ENCODE measurements at regions of chr2 and their contacts with region 1.

Region 1: GRCh38 chr2:170815746-170816503 is 762 bp upstream of the GAD1 start:
- DNase-seq: peak; percentile 54
- H3K4me3 Mint-ChIP-seq: peak overlapping the region; percentile 79
- H3K27ac Mint-ChIP-seq: peak overlapping the region; percentile 77
- H3K4me1 Mint-ChIP-seq: peaks cover 35% of the 10 kb centered on the region
- H3K27me3 Mint-ChIP-seq: peaks cover 83% of the 10 kb centered on the region

Region 2: GRCh38 chr2:170235860-170236679 is 579.9 kb before region 1 on chr2:
- intact Hi-C with region 1: loop called (anchors 1 kb)
- DNase-seq: no peak
- H3K4me3 Mint-ChIP-seq: no peak overlapping the region
- H3K27ac Mint-ChIP-seq: no peak overlapping the region
- H3K4me1 Mint-ChIP-seq: no peaks in the 10 kb centered on the region
- H3K27me3 Mint-ChIP-seq: peaks cover 21% of the 10 kb centered on the region

Region 3: DNA sequence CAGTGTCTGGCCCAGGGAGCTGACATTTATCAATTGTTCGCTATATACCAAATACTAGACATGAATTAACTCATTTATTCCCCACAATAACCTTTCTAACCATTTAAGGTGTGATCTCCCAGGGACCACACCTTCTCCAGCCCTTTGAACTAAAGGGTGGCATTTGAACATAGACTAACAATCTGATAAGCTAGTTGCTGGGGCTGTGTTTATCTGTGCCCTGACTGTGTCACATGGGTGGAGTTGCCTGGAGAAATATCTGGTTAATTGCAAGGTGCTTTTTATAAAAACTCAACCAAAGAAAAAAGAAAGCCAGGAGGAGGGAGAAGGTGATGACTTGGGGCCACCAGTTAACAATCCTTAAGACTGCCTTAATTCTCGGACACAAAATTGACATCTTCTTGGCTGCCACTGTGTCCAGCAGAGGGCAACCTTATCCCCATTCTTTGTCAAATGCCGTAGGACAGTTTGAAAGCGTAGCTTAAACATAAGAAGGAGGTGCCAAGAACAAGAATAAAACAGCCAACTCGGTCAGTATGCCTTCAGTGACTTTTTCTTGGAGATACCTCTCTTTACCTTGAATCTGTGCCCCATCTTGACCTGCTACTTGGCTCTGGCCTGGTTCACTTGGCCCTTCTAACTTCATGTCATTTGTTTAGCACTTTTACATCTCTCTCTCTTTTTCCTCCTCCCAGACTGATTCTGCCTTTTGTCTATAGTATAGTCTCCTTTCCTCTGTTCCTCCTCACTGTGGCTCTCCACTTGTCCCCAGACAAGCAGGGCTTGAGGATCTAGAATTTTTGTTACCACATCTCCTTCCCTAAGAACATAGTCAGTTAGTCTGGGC is 454.6 kb before region 1 on chr2:
- intact Hi-C with region 1: loop called (anchors 1 kb)
- DNase-seq: peak; percentile 39
- H3K4me3 Mint-ChIP-seq: no peak overlapping the region
- H3K27ac Mint-ChIP-seq: peak overlapping the region; percentile 94
- H3K4me1 Mint-ChIP-seq: peaks cover 33% of the 10 kb centered on the region
- H3K27me3 Mint-ChIP-seq: peaks cover 2% of the 10 kb centered on the region

Region 4: GRCh38 chr2:170396799-170397459 is 419.0 kb before region 1 on chr2:
- intact Hi-C with region 1: loop called (anchors 1 kb)
- DNase-seq: no peak
- H3K4me3 Mint-ChIP-seq: no peak overlapping the region
- H3K27ac Mint-ChIP-seq: no peak overlapping the region
- H3K4me1 Mint-ChIP-seq: no peaks in the 10 kb centered on the region
- H3K27me3 Mint-ChIP-seq: peaks cover 33% of the 10 kb centered on the region

Region 5: DNA sequence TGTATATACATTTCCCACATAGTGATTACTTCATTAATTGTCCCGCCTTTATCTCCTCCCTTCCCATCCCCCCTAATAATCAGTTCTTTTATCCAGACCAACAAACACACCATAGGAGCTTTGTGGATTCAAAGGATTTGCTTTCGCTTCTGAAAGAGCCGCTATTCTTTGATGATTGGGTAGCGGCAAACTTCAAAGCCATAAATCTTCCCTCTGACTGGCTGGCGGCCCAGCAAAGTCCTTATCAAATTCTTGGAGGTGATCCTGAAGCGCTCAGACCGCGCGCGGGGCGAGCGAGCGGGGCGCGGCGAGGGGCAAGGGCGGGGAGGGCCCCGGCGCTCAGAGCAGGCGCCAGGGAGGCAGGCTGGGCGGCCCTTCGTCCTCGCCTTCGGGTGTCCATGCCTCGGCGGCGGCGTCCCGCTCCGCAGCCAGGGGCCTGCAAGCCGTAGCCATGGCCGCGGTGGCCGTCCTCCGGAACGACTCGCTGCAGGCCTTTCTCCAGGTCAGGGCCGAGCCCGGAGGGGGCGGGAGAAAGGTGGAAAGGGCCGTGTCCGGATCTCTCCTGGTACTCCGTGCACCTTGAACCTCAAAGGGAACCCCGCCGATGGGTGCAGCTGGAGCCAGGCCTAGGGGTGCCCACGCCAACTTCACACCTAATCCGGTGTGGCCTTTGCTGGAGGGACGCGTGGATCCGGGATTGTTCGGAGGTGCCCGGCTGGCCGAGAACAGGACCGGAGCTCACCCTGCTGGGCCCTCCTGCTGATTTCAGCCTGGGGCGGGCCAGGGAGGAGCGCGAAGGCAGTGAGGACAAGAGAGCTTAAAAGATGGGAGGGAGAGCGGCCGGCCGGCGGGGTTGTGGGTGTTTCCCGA is 100.6 kb before region 1 on chr2 and contains the start of gene SP5:
- intact Hi-C with region 1: loop called (anchors 1 kb)
- DNase-seq: peak; percentile 13
- H3K4me3 Mint-ChIP-seq: peak within 1 kb of the TSS; percentile 78
- H3K27ac Mint-ChIP-seq: peak within 1 kb of the TSS; percentile 61
- H3K4me1 Mint-ChIP-seq: peaks cover 31% of the 10 kb centered on the region
- H3K27me3 Mint-ChIP-seq: peaks cover 68% of the 10 kb centered on the region
- total RNA-seq, gene SP5: not detected in 2 replicates

Region 6: DNA sequence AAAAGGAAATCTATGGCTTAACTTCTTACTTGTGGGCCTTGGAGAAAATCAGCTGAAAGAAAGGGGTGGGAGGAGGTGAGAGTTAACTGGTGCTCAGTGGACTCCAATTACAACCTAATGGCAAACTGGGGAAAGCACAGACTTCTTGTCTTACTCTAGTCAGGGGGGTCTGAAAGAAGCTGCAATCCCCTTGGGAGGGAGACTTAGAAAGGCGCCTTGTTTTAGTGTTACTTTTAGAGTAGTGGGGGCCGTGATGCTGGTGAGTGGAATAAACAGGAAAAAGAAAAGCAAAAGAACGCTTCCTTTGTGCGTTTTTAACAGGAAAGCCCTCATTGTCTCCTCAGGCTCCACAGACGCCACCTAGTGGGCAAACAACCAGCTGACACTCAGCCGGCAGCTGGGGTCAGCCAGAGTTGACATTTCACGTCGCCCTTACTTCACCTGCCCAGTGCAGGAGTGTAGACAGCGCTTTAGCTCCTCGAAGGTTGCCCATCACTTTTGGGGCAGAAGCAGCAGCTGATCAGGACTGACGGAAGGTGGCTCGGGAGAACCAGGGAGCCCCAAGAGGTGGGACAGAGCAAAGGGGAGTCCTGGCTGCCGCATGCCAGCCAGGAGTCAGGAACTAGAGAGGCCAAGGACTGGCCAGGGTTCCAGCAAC is 57.2 kb after region 1 on chr2:
- intact Hi-C with region 1: loop called (anchors 2 kb)
- DNase-seq: peak; percentile 63
- H3K4me3 Mint-ChIP-seq: peak overlapping the region; percentile 38
- H3K27ac Mint-ChIP-seq: peak overlapping the region; percentile 73
- H3K4me1 Mint-ChIP-seq: peaks cover 13% of the 10 kb centered on the region
- H3K27me3 Mint-ChIP-seq: no peaks in the 10 kb centered on the region

Region 7: GRCh38 chr2:172102391-172103278 is 1286.7 kb after region 1 on chr2 and contains the start of gene DLX2:
- intact Hi-C with region 1: loop called (anchors 5 kb)
- DNase-seq: peak; percentile 44
- H3K4me3 Mint-ChIP-seq: peak within 1 kb of the TSS; percentile 71
- H3K27ac Mint-ChIP-seq: peak within 1 kb of the TSS; percentile 82
- H3K4me1 Mint-ChIP-seq: peaks cover 52% of the 10 kb centered on the region
- H3K27me3 Mint-ChIP-seq: peaks cover 73% of the 10 kb centered on the region
- total RNA-seq, gene DLX2: 0.20 TPM in 1 of 2 replicates, not detected in the other

Measured in activated T-helper 1 cell treated with anti-CD3 and anti-CD28 coated beads, Interleukin-12 subunit alpha, Interleukin-12 subunit beta, Interleukin-2, Interleukin-4 antibody, amounts not matched to agents 30 ng/mL and 10 ng/mL and 1 ng/mL, durations not matched to agents 14 hours and 24 hours and 36 hours (primary cell).